Activated CD8-positive, alpha-beta T cell treated with anti-CD3 and anti-CD28 coated beads, Interleukin-2, amount 10 ng/mL, durations not matched to agents 7 days and 5 days (primary cell): ENCODE measurements at regions of chr19 and their contacts with region 1.

Region 1: DNA sequence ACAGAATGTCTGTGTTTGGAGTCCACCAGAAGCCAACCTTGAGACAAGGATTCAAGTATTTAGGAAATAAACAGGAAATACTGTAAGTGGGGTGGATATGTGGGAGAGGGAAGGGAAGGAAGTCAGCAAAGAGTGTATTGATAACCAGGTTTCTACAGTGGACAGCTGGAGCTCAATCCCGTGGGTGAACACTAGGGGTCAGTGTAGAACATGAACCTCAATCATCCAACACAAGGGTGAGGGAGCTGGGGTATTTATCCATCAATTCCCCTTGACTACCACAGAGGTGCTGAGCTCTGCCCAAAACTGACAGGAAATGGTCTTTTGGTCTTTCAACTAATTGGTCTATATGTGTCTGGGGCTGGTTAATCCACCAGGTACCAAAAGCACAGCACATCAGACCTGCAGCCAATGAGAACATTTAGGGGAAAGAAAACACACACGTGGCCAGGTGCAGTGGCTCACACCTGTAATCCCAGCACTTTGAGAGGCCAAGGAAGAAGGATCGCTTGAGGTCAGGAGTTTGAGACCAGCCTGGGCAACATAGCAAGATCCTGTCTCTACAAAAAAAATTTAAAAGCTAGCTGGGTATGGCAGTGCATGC is 5.6 kb upstream of the SYDE1 start:
- DNase-seq: peak; percentile 73
- ATAC-seq: peak; percentile 57
- H3K4me3 Mint-ChIP-seq: no peak overlapping the region
- H3K27ac Mint-ChIP-seq: no peak overlapping the region
- H3K4me1 Mint-ChIP-seq: peaks cover 3% of the 10 kb centered on the region
- H3K27me3 Mint-ChIP-seq: peaks cover 6% of the 10 kb centered on the region

Region 2: DNA sequence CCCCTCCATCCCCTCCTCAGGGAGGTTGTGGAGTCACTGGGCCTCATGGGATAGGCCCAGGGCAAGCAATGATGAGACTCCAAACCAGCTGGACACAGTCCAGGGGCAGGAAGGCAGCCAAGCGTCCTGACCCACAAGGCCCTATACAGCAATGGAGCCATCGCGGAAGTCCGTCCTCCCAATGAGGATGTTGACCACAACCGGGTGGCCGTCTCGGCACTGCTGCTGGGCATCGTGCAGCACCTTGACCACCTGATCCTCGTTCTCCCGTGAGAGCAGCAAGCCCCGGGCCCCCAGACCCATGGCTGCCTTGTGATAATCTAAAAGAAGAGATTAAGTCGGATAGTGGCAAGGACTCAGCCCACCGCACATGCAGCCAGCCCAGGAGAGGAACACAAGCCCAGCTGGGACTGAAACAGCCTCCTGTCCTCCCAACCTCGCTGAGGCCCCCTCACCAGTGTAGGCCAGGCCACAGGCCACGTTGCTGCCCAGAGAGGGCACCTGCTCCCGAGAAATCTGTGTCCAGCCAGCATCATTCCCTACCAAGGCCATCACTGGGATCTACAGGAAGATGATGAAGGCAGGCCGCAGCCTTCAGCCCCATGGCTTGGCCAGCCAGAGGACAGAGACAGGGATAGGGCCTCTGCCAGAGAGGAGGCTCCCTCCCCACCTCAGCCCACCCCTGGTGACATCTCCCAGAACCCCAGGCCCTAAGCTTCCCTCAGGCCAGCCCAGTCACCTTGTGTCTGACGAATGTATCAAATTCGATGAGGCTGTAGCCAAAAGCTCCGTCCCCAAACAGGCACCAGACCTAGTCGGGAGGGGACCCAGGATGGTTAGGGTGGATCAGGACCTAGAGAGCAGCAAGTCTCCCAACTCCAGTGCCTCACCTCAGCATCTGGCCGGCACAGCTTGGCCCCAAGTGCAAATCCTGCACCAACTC is 13.8 kb after region 1 on chr19:
- CTCF ChIA-PET with region 1: interaction called, 22 read pairs
- POLR2A ChIA-PET with region 1: interaction called, 3 read pairs
- DNase-seq: no peak
- ATAC-seq: no peak
- H3K4me3 Mint-ChIP-seq: no peak overlapping the region
- H3K27ac Mint-ChIP-seq: no peak overlapping the region
- H3K4me1 Mint-ChIP-seq: no peaks in the 10 kb centered on the region
- H3K27me3 Mint-ChIP-seq: no peaks in the 10 kb centered on the region

Region 3: DNA sequence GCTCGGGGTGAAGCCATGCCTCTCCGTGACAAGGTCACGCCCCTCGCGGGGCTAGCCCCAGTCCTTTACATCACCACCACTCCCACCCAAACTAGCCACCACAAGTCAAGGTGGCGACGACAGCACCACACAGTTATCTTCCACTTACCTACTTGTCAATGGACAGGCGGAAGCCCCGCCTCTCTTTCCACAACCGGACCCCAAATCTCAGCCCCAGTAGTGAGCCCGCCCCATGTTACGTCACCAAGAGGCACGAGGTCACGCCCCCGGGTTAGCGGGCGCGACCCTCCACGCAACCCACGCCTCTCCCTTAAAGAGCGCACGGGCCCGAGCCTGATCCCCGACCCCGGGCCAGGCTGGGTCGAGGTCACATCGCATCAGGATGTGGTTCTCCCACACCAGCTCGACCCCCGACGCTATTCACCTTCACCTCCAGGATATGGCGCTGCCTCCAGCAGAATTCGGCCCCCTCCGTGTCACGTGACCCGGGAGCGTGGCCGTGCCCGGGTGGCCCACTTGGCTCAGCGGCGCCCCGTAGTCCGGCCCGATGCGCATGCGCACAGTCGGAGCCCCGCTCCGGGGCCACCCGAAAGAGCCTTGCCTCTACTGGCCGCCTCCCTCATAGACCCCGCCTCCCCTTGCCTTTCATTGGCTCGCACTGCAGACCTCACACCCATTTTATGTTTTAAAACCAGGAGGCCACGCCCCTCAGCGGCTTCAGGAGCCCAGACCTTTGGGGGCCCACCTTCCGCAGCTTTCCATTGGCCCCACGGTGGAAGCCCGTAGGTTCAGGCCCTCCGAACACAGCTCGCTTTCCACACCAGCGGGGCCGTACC is 23.9 kb after region 1 on chr19:
- CTCF ChIA-PET with region 1: interaction called, 22 read pairs
- POLR2A ChIA-PET with region 1: interaction called, 3 read pairs
- DNase-seq: peak; percentile 99
- ATAC-seq: peak; percentile 95
- H3K4me3 Mint-ChIP-seq: peak overlapping the region; percentile 94
- H3K27ac Mint-ChIP-seq: peak overlapping the region; percentile 95
- H3K4me1 Mint-ChIP-seq: peaks cover 32% of the 10 kb centered on the region
- H3K27me3 Mint-ChIP-seq: no peaks in the 10 kb centered on the region

Region 4: GRCh38 chr19:15154002-15154612 is 52.5 kb after region 1 on chr19:
- CTCF ChIA-PET with region 1: interaction called, 40 read pairs
- POLR2A ChIA-PET with region 1: no interaction called
- DNase-seq: peak; percentile 48
- ATAC-seq: no peak
- H3K4me3 Mint-ChIP-seq: no peak overlapping the region
- H3K27ac Mint-ChIP-seq: no peak overlapping the region
- H3K4me1 Mint-ChIP-seq: no peaks in the 10 kb centered on the region
- H3K27me3 Mint-ChIP-seq: peaks cover 7% of the 10 kb centered on the region